Gastrocnemius medialis (tissue), 4 donors: ENCODE measurements at regions of chr14 and their contacts with region 1.

Region 1: GRCh38 chr14:55398679-55399078 is 13.0 kb downstream of the ATG14 start:
- DNase-seq: peak; percentile 71 to 73
- ATAC-seq: peak; percentile 99 to 100
- H3K4me3 ChIP-seq: no peak overlapping the region
- H3K27ac ChIP-seq: peak overlapping the region; percentile 73 to 82 (median 80)
- H3K4me1 ChIP-seq: peaks cover 29 to 35% of the 10 kb centered on the region in 2 donors
- H3K27me3 ChIP-seq: no peaks in the 10 kb centered on the region
- CTCF ChIP-seq: no peak
- POLR2A ChIP-seq: peak in 1 of 2 donors; percentile 81

Region 2: GRCh38 chr14:54782751-54783679 is 615.7 kb before region 1 on chr14:
- in situ Hi-C with region 1: no loop called
- intact Hi-C with region 1: loop called (anchors 10 kb)
- DNase-seq: no peak
- ATAC-seq: no peak
- H3K4me3 ChIP-seq: no peak overlapping the region
- H3K27ac ChIP-seq: peak overlapping the region; percentile 98 to 100 (median 99)
- H3K4me1 ChIP-seq: peaks cover 50% of the 10 kb centered on the region in 2 donors
- H3K27me3 ChIP-seq: no peaks in the 10 kb centered on the region
- CTCF ChIP-seq: no peak
- POLR2A ChIP-seq: no peak

Region 3: GRCh38 chr14:55689981-55690863 is 291.5 kb after region 1 on chr14:
- in situ Hi-C with region 1: no loop called
- intact Hi-C with region 1: loop called (anchors 10 kb)
- DNase-seq: no peak
- ATAC-seq: peak; percentile 49 to 70
- H3K4me3 ChIP-seq: no peak overlapping the region
- H3K27ac ChIP-seq: peak overlapping the region in 1 of 4 donors; percentile 32
- H3K4me1 ChIP-seq: peaks cover 24% of the 10 kb centered on the region in 2 donors
- H3K27me3 ChIP-seq: no peaks in the 10 kb centered on the region
- CTCF ChIP-seq: no peak
- POLR2A ChIP-seq: no peak